IMR-90 (cell line): ENCODE measurements at regions of chr19 and their contacts with region 1.

Region 1: DNA sequence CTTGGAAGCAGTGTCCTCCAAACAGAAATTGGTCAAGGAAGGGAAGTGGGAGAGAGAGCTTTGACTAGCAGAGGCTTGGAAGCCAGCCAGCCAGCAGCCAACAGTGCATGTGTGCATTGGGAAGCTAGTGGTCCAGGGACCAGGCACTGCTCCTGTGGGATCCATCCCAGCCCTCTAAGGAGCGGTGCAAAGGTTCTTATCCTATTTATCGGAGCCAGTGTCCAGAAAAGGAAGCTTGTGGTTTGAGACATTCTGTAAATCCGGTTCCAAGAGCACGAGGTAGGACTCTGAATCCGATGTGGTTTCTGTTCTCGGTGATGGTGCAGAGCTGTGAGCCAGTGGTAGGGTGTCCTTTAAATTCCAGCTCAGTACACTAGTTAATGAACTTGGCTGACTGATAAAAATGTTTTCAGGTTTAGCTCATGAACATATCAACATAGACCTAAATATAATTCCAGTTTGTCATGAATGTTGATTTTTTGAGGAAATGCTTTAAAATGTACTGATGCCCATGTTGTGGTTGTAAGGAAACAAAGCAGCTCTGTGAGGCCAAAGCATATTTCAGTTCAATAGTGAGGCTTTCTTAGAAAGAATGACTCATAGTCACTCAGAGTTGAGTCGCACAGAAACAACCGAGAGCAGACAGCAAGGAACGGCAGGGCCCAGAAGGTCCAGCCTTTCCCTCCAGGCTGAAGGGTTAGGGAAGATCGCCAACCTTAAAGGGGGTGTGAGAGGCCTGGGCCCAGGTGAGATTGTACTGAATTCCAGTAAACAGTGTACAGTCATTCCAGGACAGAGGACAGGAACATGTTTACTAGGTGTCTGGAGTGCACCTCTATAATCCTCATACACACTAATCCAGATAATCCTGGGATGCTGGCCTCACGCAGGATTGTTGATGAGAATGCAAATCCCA is 21.5 kb upstream of the GARRE1 start:
- DNase-seq: peak; percentile 96
- ATAC-seq: peak; percentile 84
- H3K4me3 ChIP-seq: peak overlapping the region; percentile 16; the same call in 1 of the 2 replicates
- H3K27ac ChIP-seq: peak overlapping the region; percentile 83
- H3K4me1 ChIP-seq: peaks cover 16% of the 10 kb centered on the region
- H3K27me3 ChIP-seq: no peaks in the 10 kb centered on the region
- CTCF ChIP-seq: no peak
- POLR2A ChIP-seq: no peak
- RAD21 ChIP-seq: no peak

Region 2: GRCh38 chr19:34041925-34042521 is 190.8 kb before region 1 on chr19:
- CTCF ChIA-PET with region 1: no interaction called
- POLR2A ChIA-PET with region 1: no interaction called
- dilution Hi-C with region 1: no loop called
- in situ Hi-C with region 1: no loop called
- intact Hi-C with region 1: no loop called
- DNase-seq: peak; percentile 33
- ATAC-seq: peak; percentile 83
- H3K4me3 ChIP-seq: no peak overlapping the region
- H3K27ac ChIP-seq: no peak overlapping the region
- H3K4me1 ChIP-seq: no peaks in the 10 kb centered on the region
- H3K27me3 ChIP-seq: no peaks in the 10 kb centered on the region; the same call in 1 of the 2 replicates
- CTCF ChIP-seq: peak; percentile 76
- POLR2A ChIP-seq: no peak
- RAD21 ChIP-seq: peak; percentile 60

Region 3: GRCh38 chr19:34181111-34181864 is 51.5 kb before region 1 on chr19:
- CTCF ChIA-PET with region 1: no interaction called
- POLR2A ChIA-PET with region 1: no interaction called
- dilution Hi-C with region 1: no loop called
- in situ Hi-C with region 1: no loop called
- intact Hi-C with region 1: no loop called
- DNase-seq: no peak
- ATAC-seq: no peak
- H3K4me3 ChIP-seq: no peak overlapping the region
- H3K27ac ChIP-seq: no peak overlapping the region
- H3K4me1 ChIP-seq: peaks cover 15% of the 10 kb centered on the region
- H3K27me3 ChIP-seq: no peaks in the 10 kb centered on the region
- CTCF ChIP-seq: no peak
- POLR2A ChIP-seq: no peak
- RAD21 ChIP-seq: no peak

Region 4: GRCh38 chr19:34274827-34275625 is 42.2 kb after region 1 on chr19:
- CTCF ChIA-PET with region 1: no interaction called
- POLR2A ChIA-PET with region 1: no interaction called
- dilution Hi-C with region 1: no loop called
- in situ Hi-C with region 1: no loop called
- intact Hi-C with region 1: loop called (anchors 2 kb)
- DNase-seq: peak; percentile 96
- ATAC-seq: peak; percentile 84
- H3K4me3 ChIP-seq: no peak overlapping the region
- H3K27ac ChIP-seq: peak overlapping the region; percentile 94
- H3K4me1 ChIP-seq: peaks cover 32% of the 10 kb centered on the region
- H3K27me3 ChIP-seq: no peaks in the 10 kb centered on the region
- CTCF ChIP-seq: peak; percentile 32
- POLR2A ChIP-seq: no peak
- RAD21 ChIP-seq: no peak; the same call in 1 of the 2 replicates

Region 5: DNA sequence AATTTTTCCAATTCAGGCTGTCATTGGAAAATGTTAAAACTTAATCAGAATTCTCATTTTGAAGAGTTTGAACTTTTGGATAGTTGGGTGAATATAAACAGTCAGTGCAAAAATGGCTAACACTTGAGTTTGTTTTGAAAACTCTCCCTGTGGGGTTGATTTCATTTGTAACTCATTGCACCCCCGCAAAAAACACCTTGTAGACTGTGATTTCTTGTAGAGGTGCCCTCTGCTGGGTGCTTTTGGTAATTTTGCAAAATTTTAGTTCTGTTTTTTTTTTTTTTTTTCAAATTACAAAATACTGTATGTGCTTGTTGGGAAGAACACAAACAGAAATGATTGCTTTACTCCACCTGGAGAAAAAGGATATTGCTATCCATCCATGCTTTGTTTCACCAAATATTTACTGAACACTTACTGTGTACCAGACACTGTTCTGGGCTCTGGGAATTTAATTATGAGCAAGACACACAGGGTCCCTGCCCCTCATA is 104.0 kb after region 1 on chr19:
- CTCF ChIA-PET with region 1: interaction called, 3 read pairs
- POLR2A ChIA-PET with region 1: no interaction called
- dilution Hi-C with region 1: no loop called
- in situ Hi-C with region 1: loop called (anchors 10 kb)
- intact Hi-C with region 1: loop called (anchors 5 kb)
- DNase-seq: peak; percentile 47
- ATAC-seq: peak; percentile 64
- H3K4me3 ChIP-seq: no peak overlapping the region
- H3K27ac ChIP-seq: no peak overlapping the region
- H3K4me1 ChIP-seq: peaks cover 4% of the 10 kb centered on the region; the same call in 1 of the 2 replicates
- H3K27me3 ChIP-seq: no peaks in the 10 kb centered on the region
- CTCF ChIP-seq: peak; percentile 61
- POLR2A ChIP-seq: no peak
- RAD21 ChIP-seq: peak; percentile 53

Region 6: GRCh38 chr19:34512254-34512822 is 279.5 kb after region 1 on chr19:
- CTCF ChIA-PET with region 1: no interaction called
- POLR2A ChIA-PET with region 1: no interaction called
- dilution Hi-C with region 1: no loop called
- in situ Hi-C with region 1: no loop called
- intact Hi-C with region 1: no loop called
- DNase-seq: no peak
- ATAC-seq: peak; percentile 16; the same call in 1 of the 2 replicates
- H3K4me3 ChIP-seq: no peak overlapping the region
- H3K27ac ChIP-seq: no peak overlapping the region
- H3K4me1 ChIP-seq: no peaks in the 10 kb centered on the region
- H3K27me3 ChIP-seq: peaks cover 9% of the 10 kb centered on the region; the same call in 1 of the 2 replicates
- CTCF ChIP-seq: no peak
- POLR2A ChIP-seq: no peak
- RAD21 ChIP-seq: no peak